Lower leg skin (tissue), 4 donors: ENCODE measurements at regions of chr2 and their contacts with region 1.

Region 1: DNA sequence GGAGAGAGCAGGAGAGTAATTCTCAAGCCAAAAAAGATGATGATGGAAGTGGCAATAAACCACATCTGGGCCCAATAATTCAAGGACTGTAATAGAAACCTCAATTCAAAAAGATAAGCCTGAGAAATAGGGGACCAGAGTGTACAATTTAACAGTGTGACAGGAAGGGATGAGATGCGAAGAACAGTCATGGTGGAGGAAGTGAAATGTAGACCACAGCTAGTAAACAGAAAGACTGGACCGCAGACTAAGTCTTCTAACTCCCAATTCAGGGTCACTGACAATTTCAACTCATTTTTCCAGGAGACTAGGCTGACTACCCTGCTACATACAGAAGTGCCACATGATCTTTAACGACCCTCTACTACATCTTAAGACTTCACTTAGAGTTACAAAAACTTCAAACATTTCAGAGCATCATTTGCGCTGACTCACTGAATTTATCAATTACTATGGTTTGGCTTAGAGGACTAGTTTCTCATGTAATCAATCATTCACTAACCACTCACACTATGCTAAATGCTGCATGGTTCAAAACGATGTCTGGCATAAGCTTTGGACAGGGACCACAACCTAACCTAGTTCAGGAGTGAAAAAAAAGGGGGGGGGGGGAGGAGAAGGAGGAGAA is 9.0 kb downstream of the CUL3 start:
- DNase-seq: no peak
- H3K4me3 ChIP-seq: no peak overlapping the region
- CTCF ChIP-seq: no peak
- POLR2A ChIP-seq: no peak

Region 2: DNA sequence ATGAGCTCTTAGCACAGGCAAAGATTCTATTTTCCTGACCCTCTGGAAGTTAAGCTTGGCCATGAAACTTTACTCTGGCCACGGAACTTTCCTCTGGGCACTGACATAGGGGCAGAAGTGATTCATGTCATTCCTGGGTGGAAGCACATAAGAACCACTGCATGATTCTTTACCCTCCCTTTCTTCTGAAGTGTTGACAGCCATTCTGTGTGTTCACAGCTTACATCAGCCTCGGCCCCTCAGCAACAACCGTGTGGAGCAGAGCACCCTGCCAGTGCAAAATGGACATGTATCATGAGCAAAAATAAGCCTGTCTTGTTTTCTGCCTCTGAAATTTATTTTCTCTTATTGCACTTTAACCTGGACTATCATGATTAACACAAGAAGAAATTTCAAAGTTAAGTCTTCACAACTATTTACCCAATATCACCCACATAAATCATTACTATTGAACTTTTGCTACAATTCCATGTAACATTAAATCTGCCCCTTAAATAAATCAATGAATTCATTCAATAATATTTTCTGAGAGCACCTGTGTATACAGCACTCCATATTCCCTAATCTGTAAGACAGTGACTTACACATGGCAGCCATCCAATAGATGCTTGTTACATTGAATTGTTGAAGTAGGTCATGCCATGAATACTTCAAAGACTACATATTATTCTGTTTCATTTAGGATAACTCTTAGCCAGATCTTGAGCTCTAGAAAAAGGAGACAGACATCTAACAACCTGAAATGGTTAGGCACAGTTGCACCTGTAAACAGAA is 1691.5 kb after region 1 on chr2:
- intact Hi-C with region 1: loop called (anchors 10 kb)
- DNase-seq: no peak
- H3K4me3 ChIP-seq: no peak overlapping the region
- CTCF ChIP-seq: no peak
- POLR2A ChIP-seq: no peak